Naive thymus-derived CD4-positive, alpha-beta T cell (primary cell): ENCODE measurements at regions of chr15 and their contacts with region 1.

Region 1: DNA sequence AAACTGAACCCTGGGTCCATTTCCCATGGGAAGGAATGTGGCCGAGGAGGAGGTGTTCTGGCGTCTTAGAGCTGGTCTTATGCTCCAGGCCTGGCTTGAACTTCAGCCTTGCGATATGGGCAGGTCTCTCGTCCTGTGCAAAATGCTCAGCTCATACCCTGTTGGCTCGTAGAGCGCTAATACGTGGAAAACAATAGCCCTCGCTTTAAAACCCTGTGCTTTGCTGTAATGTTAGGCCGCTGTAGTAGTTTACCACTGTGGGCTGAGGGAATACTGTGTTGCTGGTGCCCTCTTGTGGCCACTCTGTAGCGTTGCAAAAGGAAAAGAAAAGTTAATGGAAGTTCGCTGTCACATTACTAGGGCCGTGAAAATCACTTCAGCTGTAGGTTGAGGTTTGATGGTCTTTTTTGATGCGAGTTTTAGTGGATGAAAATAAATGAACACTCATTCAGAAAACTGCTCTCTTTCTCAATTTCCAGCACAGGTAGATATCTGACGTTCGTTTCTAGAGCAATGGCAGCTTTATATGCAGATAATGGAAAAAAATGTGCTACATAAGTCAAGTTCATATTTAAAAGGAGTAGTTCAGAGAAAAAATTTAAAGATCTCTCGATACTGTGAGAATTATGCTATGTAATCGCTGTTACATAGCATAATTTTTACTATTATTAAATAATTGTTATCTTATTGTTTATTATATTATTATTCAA is 92.9 kb downstream of the MCTP2 start:
- DNase-seq: peak; percentile 9 to 60 (median 44)
- ATAC-seq: peak; percentile 98
- H3K4me3 ChIP-seq: no peak overlapping the region
- H3K4me3 Mint-ChIP-seq: peak overlapping the region in 3 of 10 donors; percentile 15 to 45 (median 29)
- H3K27ac ChIP-seq: no peak overlapping the region
- H3K27ac Mint-ChIP-seq: peak overlapping the region in 1 of 9 donors; percentile 16
- H3K4me1 ChIP-seq: peaks cover 0 to 8% of the 10 kb centered on the region in 2 donors
- H3K4me1 Mint-ChIP-seq: peaks cover 0 to 25% (median 4%) of the 10 kb centered on the region in 7 donors
- H3K27me3 ChIP-seq: no peaks in the 10 kb centered on the region
- H3K27me3 Mint-ChIP-seq: no peaks in the 10 kb centered on the region

Region 2: DNA sequence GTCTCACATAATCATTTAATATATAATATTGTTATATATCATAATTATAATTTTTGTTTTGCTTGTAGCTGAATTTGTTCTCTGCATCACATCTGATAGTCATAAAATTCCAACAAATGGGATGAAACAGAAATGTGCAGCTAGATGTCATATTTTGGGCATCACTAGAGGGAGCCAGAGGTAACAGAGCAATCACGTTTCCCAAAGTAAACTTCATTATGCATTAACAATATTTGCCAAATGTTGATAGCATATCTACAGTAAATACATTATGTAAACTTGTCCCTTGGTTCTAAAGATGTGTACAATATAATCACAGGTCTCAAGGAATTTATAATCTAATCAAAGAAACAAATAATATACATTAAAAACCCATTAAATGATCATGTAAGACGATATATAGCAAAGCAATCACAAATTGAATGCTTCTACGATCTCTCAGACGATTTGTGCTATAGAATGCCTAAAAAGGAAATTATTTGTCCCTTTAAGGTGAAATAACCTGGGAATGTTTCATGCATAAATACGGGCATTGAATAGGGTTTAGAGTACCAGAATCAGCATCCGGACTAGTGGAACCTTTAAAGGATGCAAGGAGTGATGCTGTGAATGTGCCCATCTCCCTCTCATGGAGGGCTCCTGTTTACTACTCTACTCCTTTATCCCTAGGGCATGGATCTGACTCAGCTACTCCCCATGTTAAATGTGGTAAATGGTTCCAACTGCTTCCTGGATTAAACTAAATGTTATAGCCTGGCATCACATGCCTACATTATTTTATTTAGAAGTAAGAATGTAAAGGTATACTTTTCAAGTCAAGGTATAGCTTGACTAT is 327.0 kb before region 1 on chr15:
- CTCF ChIA-PET with region 1: no interaction called
- POLR2A ChIA-PET with region 1: no interaction called
- intact Hi-C with region 1: loop called in 1 of 2 experiments (anchors 1 kb)
- DNase-seq: no peak
- ATAC-seq: no peak
- H3K4me3 ChIP-seq: no peak overlapping the region
- H3K4me3 Mint-ChIP-seq: no peak overlapping the region
- H3K27ac ChIP-seq: no peak overlapping the region
- H3K27ac Mint-ChIP-seq: no peak overlapping the region
- H3K4me1 ChIP-seq: no peaks in the 10 kb centered on the region
- H3K4me1 Mint-ChIP-seq: peaks cover 0 to 3% (median 0%) of the 10 kb centered on the region in 7 donors
- H3K27me3 ChIP-seq: no peaks in the 10 kb centered on the region
- H3K27me3 Mint-ChIP-seq: peaks cover 0 to 12% (median 4%) of the 10 kb centered on the region in 5 donors

Region 3: GRCh38 chr15:94206463-94207167 is 117.7 kb before region 1 on chr15:
- CTCF ChIA-PET with region 1: no interaction called
- POLR2A ChIA-PET with region 1: no interaction called
- intact Hi-C with region 1: loop called in 1 of 2 experiments (anchors 1 kb)
- DNase-seq: peak in 2 of 9 donors; percentile 2 to 44
- ATAC-seq: peak; percentile 89
- H3K4me3 ChIP-seq: no peak overlapping the region
- H3K4me3 Mint-ChIP-seq: peak overlapping the region in 8 of 10 donors; percentile 4 to 82 (median 41)
- H3K27ac ChIP-seq: no peak overlapping the region
- H3K27ac Mint-ChIP-seq: peak overlapping the region in 1 of 9 donors; percentile 86
- H3K4me1 ChIP-seq: no peaks in the 10 kb centered on the region
- H3K4me1 Mint-ChIP-seq: peaks cover 6 to 37% (median 12%) of the 10 kb centered on the region in 7 donors
- H3K27me3 ChIP-seq: no peaks in the 10 kb centered on the region
- H3K27me3 Mint-ChIP-seq: peaks cover 10 to 38% (median 31%) of the 10 kb centered on the region in 5 donors

Region 4: GRCh38 chr15:94287794-94288246 is 36.5 kb before region 1 on chr15:
- CTCF ChIA-PET with region 1: interaction called, 3 read pairs
- POLR2A ChIA-PET with region 1: no interaction called
- intact Hi-C with region 1: loop called in 1 of 2 experiments (anchors 5 kb)
- DNase-seq: peak in 4 of 9 donors; percentile 4 to 48 (median 12)
- ATAC-seq: peak; percentile 95
- H3K4me3 ChIP-seq: no peak overlapping the region
- H3K4me3 Mint-ChIP-seq: peak overlapping the region in 7 of 10 donors; percentile 3 to 86 (median 36)
- H3K27ac ChIP-seq: no peak overlapping the region
- H3K27ac Mint-ChIP-seq: peak overlapping the region in 2 of 9 donors; percentile 44 to 90
- H3K4me1 ChIP-seq: peaks cover 0 to 19% of the 10 kb centered on the region in 2 donors
- H3K4me1 Mint-ChIP-seq: peaks cover 11 to 55% (median 33%) of the 10 kb centered on the region in 7 donors
- H3K27me3 ChIP-seq: no peaks in the 10 kb centered on the region
- H3K27me3 Mint-ChIP-seq: no peaks in the 10 kb centered on the region

Region 5: DNA sequence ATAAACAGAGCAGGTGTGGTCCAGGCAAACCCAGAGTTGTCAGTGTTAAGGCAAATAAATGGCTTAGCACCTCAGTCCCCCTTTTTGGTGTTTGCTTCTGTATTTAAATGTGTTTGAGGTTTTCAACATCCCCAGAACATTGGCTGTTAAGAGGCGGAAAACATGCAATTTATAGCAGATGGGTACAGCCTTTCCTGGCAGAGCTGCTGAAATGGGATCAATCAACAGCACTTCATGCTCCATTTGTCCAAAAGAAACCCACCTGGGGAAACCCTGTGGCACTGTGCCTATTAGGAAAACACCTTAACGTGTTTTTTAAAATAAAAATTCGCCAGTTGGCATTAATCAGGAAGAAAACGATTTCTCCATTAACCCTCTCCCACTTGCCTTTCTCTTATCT is 42.5 kb after region 1 on chr15:
- CTCF ChIA-PET with region 1: no interaction called
- POLR2A ChIA-PET with region 1: no interaction called
- intact Hi-C with region 1: no loop called
- DNase-seq: no peak
- ATAC-seq: no peak
- H3K4me3 ChIP-seq: no peak overlapping the region
- H3K4me3 Mint-ChIP-seq: no peak overlapping the region
- H3K27ac ChIP-seq: no peak overlapping the region
- H3K27ac Mint-ChIP-seq: no peak overlapping the region
- H3K4me1 ChIP-seq: no peaks in the 10 kb centered on the region
- H3K4me1 Mint-ChIP-seq: peaks cover 0 to 4% (median 0%) of the 10 kb centered on the region in 7 donors
- H3K27me3 ChIP-seq: no peaks in the 10 kb centered on the region
- H3K27me3 Mint-ChIP-seq: no peaks in the 10 kb centered on the region

Region 6: DNA sequence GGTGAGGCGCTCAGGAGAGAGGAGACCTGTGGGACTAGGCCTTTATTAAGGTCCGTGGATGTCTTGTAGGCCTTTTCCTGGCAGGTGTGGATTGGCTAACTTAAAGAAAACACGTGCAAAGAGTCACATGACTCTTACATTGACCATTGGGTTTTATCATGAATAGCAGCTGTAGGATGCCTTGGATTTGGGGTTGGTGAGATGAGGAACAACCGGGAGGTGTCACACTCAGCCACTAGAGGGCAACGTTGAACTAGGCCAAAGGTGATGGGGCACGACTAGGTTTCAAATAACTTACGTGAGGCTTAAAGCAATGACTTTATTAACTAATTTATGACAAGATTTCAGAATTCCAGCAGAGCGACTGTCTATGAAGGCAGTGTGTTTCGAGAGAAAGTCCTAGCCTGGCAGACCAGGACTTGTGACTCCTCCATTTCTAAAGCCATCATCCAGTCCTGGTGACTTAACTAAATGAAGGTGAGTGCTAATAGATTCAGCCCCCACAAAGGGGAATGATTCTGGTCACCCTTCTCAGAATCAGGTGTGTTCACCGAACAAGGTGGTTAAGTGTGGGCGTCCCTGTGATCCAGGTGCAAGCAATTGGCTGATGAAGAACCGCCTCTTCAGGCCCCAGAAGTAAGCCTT is 252.7 kb after region 1 on chr15:
- CTCF ChIA-PET with region 1: no interaction called
- POLR2A ChIA-PET with region 1: no interaction called
- intact Hi-C with region 1: loop called in 1 of 2 experiments (anchors 5 kb)
- DNase-seq: peak in 5 of 9 donors; percentile 7 to 43 (median 13)
- ATAC-seq: peak; percentile 59
- H3K4me3 ChIP-seq: no peak overlapping the region
- H3K4me3 Mint-ChIP-seq: no peak overlapping the region
- H3K27ac ChIP-seq: no peak overlapping the region
- H3K27ac Mint-ChIP-seq: no peak overlapping the region
- H3K4me1 ChIP-seq: no peaks in the 10 kb centered on the region
- H3K4me1 Mint-ChIP-seq: peaks cover 8 to 19% (median 10%) of the 10 kb centered on the region in 7 donors
- H3K27me3 ChIP-seq: peaks cover 0 to 6% of the 10 kb centered on the region in 2 donors
- H3K27me3 Mint-ChIP-seq: peaks cover 52 to 72% (median 65%) of the 10 kb centered on the region in 5 donors